Activated naive CD4-positive, alpha-beta T cell treated with anti-CD3 and anti-CD28 coated beads for 36 hours (primary cell): ENCODE measurements at regions of chr12 and their contacts with region 1.

Region 1: GRCh38 chr12:12562585-12563261 is at the start of gene DUSP16:
- DNase-seq: peak; percentile 85
- H3K4me3 Mint-ChIP-seq: peak within 1 kb of the TSS; percentile 78
- H3K27ac Mint-ChIP-seq: peak within 1 kb of the TSS; percentile 90
- H3K4me1 Mint-ChIP-seq: peaks cover 29% of the 10 kb centered on the region
- H3K27me3 Mint-ChIP-seq: no peaks in the 10 kb centered on the region
- total RNA-seq, gene DUSP16: 45.7 to 47.2 TPM

Region 2: GRCh38 chr12:12356886-12357718 is 205.6 kb before region 1 on chr12 and contains the start of gene BORCS5:
- CTCF ChIA-PET with region 1: no interaction called
- intact Hi-C with region 1: loop called (anchors 1 kb)
- DNase-seq: peak; percentile 98
- H3K4me3 Mint-ChIP-seq: peak within 1 kb of the TSS; percentile 81
- H3K27ac Mint-ChIP-seq: peak within 1 kb of the TSS; percentile 90
- H3K4me1 Mint-ChIP-seq: peaks cover 41% of the 10 kb centered on the region
- H3K27me3 Mint-ChIP-seq: no peaks in the 10 kb centered on the region
- total RNA-seq, gene BORCS5: 31.2 to 35.6 TPM

Region 3: DNA sequence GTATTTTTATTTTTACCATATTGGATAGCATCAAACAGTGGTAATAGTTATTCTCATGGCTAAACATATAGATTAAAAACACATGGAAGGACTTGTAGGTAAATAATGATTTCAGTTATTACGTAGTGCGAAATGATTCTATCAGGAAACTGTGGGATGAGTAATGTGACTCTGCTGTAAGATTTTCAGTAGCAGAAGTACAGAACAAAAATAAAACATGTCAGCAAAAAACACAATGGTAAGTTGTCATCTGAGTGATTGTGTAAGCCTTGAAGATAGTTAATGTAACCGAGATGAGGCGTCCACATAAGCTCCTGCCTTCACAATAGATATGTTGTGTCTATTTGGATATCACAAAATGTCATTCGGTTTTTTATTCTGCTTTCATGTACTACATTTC is 106.1 kb before region 1 on chr12:
- CTCF ChIA-PET with region 1: interaction called, 5 read pairs
- intact Hi-C with region 1: loop called (anchors 5 kb)
- DNase-seq: no peak
- H3K4me3 Mint-ChIP-seq: peak overlapping the region; percentile 17
- H3K27ac Mint-ChIP-seq: peak overlapping the region; percentile 76
- H3K4me1 Mint-ChIP-seq: peaks cover 51% of the 10 kb centered on the region
- H3K27me3 Mint-ChIP-seq: no peaks in the 10 kb centered on the region

Region 4: DNA sequence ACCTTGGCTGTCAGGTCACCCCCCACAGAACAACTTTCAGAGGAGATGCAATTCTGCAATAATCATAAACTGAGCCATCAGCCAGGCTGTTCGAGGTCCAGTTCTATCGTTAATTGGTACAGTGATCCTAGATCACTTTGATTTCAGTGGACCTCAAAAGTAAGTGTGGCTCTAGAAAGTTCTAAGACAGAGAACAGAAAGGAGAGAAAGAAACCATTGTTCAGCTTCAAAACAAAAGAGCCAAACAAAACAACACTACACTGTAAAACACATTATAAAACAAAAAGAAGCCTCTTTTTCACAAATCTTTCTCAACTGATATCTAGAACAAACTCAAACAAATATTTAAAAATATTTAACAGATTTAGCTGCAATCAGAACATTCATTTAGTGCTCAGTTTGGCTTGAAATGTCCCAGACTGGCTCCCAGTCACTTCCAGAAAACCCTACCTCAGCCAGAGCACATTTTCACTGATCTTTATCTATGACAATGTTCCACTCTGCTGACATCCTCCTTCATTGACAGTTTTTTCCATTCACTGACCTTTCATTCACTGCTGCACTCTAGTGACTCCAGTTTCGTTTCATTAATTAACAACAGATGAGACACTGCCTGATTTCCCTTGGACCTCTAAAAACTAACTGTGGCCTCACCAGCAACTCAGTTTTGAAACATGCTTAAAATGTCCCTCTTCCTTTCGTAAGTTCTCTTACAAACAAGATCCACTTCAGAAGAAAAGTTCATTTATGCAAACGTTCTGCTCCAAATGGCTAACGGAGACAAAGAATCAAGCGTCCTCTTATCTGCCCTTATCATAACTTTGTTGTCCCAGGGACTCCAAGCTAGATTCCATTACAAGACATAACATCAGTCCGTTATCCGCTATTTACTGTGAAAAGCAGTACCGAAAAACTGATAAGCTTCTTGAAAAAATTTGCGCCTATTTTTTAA is 56.9 kb before region 1 on chr12:
- CTCF ChIA-PET with region 1: interaction called, 4 read pairs
- intact Hi-C with region 1: loop called (anchors 2 kb)
- DNase-seq: peak; percentile 61
- H3K4me3 Mint-ChIP-seq: peak overlapping the region; percentile 25
- H3K27ac Mint-ChIP-seq: peak overlapping the region; percentile 93
- H3K4me1 Mint-ChIP-seq: peaks cover 80% of the 10 kb centered on the region
- H3K27me3 Mint-ChIP-seq: no peaks in the 10 kb centered on the region

Region 5: DNA sequence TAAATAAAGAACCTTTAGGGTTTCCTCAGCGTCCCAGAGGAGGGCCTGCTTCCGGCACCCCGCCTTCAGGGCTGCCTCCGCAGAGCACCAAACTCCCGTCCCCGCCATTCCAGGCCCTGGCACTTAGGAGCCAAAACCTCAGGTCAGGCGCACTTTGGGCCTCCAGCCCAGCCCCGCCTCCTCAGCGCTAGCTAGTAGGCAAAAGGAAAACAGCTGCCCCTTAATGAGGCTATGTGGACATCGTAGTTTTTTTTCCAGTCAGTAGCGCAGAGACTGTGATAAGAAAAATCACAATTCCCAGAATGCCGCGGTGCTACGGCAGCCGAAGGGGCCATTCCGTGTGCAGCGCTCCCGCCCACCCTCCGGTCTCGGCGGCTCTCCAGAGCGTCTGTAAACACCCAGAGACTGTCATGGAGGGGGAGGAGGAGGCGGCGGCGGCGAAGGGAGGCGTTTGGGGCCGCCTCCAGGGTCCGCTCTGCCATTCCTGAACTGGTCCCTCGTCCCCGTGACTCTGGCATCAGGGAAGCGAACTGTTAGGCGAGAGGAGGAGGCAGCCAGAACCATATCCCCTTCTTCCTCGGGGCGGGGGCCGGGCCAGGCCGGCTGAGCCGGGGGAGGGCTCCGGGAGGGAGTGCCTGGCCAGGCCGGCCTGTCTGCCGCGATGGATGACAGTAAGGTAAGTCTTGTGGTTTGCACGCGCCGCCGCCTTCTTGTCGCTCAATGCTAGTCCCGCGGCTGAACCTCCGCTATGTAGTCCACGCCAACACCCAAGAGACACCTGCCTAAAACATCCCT is 49.0 kb after region 1 on chr12 and contains the start of gene CREBL2:
- CTCF ChIA-PET with region 1: interaction called, 4 read pairs
- intact Hi-C with region 1: loop called (anchors 1 kb)
- DNase-seq: peak; percentile 90
- H3K4me3 Mint-ChIP-seq: peak within 1 kb of the TSS; percentile 88
- H3K27ac Mint-ChIP-seq: peak within 1 kb of the TSS; percentile 99
- H3K4me1 Mint-ChIP-seq: peaks cover 59% of the 10 kb centered on the region
- H3K27me3 Mint-ChIP-seq: no peaks in the 10 kb centered on the region
- total RNA-seq, gene CREBL2: 15.6 to 16.1 TPM

Region 6: GRCh38 chr12:12704593-12705230 is 142.0 kb after region 1 on chr12:
- CTCF ChIA-PET with region 1: no interaction called
- intact Hi-C with region 1: loop called (anchors 1 kb)
- DNase-seq: peak; percentile 60
- H3K4me3 Mint-ChIP-seq: no peak overlapping the region
- H3K27ac Mint-ChIP-seq: no peak overlapping the region
- H3K4me1 Mint-ChIP-seq: peaks cover 23% of the 10 kb centered on the region
- H3K27me3 Mint-ChIP-seq: no peaks in the 10 kb centered on the region

Region 7: GRCh38 chr12:12803186-12803585 is 240.5 kb after region 1 on chr12:
- CTCF ChIA-PET with region 1: no interaction called
- intact Hi-C with region 1: loop called (anchors 2 kb)
- DNase-seq: peak; percentile 61
- H3K4me3 Mint-ChIP-seq: no peak overlapping the region
- H3K27ac Mint-ChIP-seq: no peak overlapping the region
- H3K4me1 Mint-ChIP-seq: peaks cover 53% of the 10 kb centered on the region
- H3K27me3 Mint-ChIP-seq: no peaks in the 10 kb centered on the region